ENCODE measurements at regions of chr6 and their contacts with region 1.

Region 1: DNA sequence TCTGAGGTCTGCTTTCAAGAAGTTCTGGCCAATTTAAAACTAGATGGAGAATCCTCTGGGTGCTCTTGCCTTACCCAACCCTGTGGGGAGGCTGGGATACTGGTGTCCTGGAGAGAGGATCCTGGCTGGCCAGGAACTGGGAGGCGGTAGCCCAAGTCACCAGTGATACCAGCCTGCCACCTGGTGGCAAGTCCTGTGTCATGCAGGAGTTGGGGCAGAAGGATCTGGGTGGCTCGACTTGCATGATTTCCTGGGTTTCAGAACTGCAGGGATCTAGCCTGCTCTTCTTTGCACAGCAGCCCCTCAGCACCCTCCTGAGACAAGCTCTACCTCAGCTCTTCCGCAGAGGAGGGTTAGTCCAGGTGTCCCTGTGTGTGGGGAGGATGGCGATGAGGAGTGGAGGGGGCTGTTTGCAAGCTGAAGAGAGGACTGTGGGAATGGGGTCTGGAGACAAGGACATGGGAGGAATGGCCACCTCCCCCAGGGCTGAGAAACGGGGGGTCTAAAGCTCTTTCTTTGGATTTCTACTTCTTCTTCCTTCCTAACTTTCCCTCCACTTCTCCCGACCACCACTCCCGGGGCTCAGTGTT is 4.2 kb downstream of the KCNK17 start:
- DNase-seq: peak; percentile 73 to 79
- H3K4me3 ChIP-seq: no peak overlapping the region
- H3K27ac ChIP-seq: no peak overlapping the region
- H3K4me1 ChIP-seq: peaks cover 11 to 15% of the 10 kb centered on the region in 2 donors
- H3K27me3 ChIP-seq: peaks cover 6% of the 10 kb centered on the region
- CTCF ChIP-seq: peak; percentile 67 to 92 (median 83)
- POLR2A ChIP-seq: no peak

Region 2: DNA sequence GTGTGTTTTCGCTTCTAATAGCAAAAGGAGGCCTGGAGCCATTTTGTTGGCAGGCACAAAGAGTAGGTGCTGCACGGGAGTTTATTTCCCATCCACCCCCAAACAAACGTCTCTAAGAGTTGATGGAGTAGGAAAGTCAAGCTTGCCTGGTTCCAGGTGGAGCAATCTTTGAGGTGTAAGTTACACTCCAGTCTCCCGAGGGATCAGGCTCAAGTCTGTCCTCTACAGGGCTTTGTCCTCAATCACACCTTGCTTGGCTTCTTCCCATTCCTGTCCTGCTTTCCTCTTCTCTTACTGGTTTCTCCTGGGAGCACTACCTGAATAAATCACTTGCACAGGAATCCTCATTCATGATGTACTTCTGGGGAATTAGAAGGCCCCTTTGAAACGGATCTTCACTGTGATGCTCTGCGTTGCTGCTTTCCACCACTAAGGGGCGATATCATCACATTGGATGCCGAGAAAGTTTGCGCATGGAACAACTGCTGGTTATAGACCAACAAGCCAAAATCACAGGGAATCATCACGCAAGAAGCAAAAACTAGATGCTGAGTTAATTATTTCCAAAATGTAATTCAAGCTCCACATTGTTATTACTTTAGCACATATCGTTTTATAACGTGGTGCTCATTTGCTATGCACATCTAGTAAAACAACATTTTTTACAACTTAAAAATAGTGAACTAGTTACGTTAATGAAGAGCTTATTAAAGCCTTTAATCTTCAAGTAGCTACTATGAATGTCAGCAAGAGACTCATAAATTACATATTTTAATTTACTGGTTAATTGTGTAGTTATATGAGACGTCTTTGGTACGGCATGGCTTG is 438.1 kb before region 1 on chr6:
- intact Hi-C with region 1: loop called (anchors 5 kb)
- DNase-seq: peak; percentile 36 to 55
- H3K4me3 ChIP-seq: no peak overlapping the region
- H3K27ac ChIP-seq: no peak overlapping the region
- H3K4me1 ChIP-seq: no peaks in the 10 kb centered on the region
- H3K27me3 ChIP-seq: no peaks in the 10 kb centered on the region
- CTCF ChIP-seq: peak; percentile 53 to 88 (median 73)
- POLR2A ChIP-seq: no peak

Measured in thyroid gland (tissue), 4 donors.